Aorta (tissue), 5 donors: ENCODE measurements at regions of chr6 and their contacts with region 1.

Region 1: GRCh38 chr6:166691199-166691598 is 64.1 kb upstream of the RPS6KA2 start:
- DNase-seq: peak in 1 of 2 donors; percentile 59
- ATAC-seq: no peak
- H3K4me3 ChIP-seq: no peak overlapping the region
- H3K27ac ChIP-seq: no peak overlapping the region
- H3K4me1 ChIP-seq: no peaks in the 10 kb centered on the region
- H3K27me3 ChIP-seq: no peaks in the 10 kb centered on the region

Region 2: GRCh38 chr6:166360243-166361076 is 330.7 kb before region 1 on chr6:
- intact Hi-C with region 1: no loop called
- DNase-seq: no peak
- ATAC-seq: no peak
- H3K4me3 ChIP-seq: no peak overlapping the region
- H3K27ac ChIP-seq: no peak overlapping the region
- H3K4me1 ChIP-seq: peaks cover 0 to 1% of the 10 kb centered on the region in 2 donors
- H3K27me3 ChIP-seq: no peaks in the 10 kb centered on the region

Region 3: DNA sequence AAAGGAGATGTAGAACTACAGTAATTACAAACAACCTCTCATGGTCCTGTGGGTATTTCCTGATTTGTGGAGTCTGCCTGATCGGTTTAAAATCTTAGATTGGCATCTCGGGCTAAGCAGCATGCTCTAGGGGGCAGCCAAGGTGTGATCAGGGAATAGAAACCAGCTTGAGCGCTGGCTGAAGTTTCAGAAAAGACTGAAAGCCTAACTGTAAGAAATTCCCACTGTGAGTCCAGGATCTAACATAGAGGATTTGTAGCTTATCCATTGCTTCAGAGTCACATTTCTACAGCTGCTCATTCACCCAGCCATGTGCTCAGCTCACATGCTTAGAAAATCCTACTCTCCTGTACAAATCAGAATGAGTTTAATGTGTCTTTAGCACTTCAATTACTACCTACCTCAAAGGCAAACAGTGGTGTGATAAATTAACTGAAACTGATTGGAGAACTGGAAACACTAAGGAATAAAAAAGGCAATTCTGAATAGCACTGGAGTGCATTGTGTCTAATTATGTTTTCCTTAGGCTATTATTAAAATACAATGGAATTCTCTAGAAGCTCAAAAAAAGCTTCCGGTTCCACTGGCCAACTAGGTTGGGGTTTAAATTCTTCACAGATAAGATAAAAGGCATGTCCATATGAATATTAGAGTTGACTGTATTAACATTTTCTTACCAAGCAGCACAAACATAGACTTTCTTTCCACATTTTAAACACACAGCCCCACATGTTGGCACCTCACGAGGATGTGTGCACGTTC is 234.6 kb before region 1 on chr6:
- intact Hi-C with region 1: loop called in 1 of 2 experiments (anchors 5 kb)
- DNase-seq: no peak
- ATAC-seq: no peak
- H3K4me3 ChIP-seq: no peak overlapping the region
- H3K27ac ChIP-seq: no peak overlapping the region
- H3K4me1 ChIP-seq: no peaks in the 10 kb centered on the region
- H3K27me3 ChIP-seq: no peaks in the 10 kb centered on the region

Region 4: GRCh38 chr6:166862287-166862977 is 171.2 kb after region 1 on chr6:
- intact Hi-C with region 1: no loop called
- DNase-seq: no peak
- ATAC-seq: peak; percentile 63
- H3K4me3 ChIP-seq: peak overlapping the region; percentile 57 to 92
- H3K27ac ChIP-seq: no peak overlapping the region
- H3K4me1 ChIP-seq: no peaks in the 10 kb centered on the region
- H3K27me3 ChIP-seq: no peaks in the 10 kb centered on the region